Activated CD8-positive, alpha-beta T cell treated with anti-CD3 and anti-CD28 coated beads for 36 hours (primary cell): ENCODE measurements at regions of chr14 and their contacts with region 1.

Region 1: DNA sequence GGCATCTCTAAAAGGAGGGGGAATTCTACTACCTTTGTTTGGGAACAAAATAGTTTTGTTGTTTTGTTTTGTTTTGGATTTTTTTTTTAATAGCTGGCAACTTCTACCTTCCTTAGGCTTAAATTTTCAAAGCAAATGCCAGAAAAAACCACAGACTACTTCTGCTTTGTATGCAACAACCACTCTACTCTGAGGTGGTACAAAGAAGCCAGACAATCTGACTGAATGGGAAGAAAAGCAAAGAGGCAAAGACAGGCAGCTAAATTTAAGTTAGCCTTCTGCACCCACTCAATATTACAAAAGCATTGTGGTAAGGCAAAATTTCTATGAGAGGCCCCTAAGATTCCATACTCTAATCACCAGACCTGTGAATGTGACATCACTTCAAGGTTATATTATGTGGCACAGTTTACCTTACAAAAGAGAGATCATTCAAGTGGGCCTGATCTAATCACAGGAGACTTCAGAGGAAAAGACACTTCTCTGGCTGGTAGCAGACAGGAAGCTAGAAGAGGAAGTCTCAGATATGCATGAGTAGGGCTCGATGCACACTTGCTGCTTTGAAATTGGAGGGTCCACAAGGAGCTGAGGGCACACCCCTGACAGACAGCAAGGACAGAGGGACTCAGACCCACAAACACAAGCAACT is 566.6 kb downstream of the RPS29 start:
- DNase-seq: no peak
- ATAC-seq: no peak
- H3K4me3 Mint-ChIP-seq: no peak overlapping the region
- H3K27ac Mint-ChIP-seq: no peak overlapping the region
- H3K4me1 Mint-ChIP-seq: no peaks in the 10 kb centered on the region
- H3K27me3 Mint-ChIP-seq: no peaks in the 10 kb centered on the region
- CTCF ChIP-seq: no peak

Region 2: DNA sequence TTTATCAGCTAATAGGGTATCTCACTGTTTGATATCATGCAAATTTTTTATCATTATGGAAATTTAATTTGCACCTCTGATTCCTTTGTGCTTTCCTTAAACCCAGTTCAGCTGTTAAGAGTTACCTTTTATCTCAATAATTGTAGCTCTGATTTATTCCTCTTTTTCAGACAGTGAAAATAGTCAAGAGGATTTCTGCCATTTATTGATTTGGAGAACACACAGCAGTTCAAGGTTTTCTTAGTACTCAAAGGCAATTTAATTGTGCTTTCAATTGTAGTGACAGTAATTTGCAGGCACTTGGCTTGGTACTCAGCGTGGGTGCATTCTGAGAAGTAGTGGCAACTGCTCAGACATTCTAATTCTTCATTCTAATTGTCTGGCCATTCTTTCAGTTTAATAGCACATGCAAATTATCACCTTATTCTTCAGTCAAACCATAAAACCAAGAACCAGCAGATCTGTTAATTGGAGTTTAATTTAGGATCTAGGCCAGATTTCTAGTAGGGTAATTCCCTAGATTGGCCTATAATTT is 142.7 kb before region 1 on chr14:
- CTCF ChIA-PET with region 1: no interaction called
- POLR2A ChIA-PET with region 1: no interaction called
- intact Hi-C with region 1: loop called (anchors 5 kb)
- DNase-seq: no peak
- ATAC-seq: no peak
- H3K4me3 Mint-ChIP-seq: no peak overlapping the region
- H3K27ac Mint-ChIP-seq: no peak overlapping the region
- H3K4me1 Mint-ChIP-seq: no peaks in the 10 kb centered on the region
- H3K27me3 Mint-ChIP-seq: no peaks in the 10 kb centered on the region
- CTCF ChIP-seq: no peak

Region 3: DNA sequence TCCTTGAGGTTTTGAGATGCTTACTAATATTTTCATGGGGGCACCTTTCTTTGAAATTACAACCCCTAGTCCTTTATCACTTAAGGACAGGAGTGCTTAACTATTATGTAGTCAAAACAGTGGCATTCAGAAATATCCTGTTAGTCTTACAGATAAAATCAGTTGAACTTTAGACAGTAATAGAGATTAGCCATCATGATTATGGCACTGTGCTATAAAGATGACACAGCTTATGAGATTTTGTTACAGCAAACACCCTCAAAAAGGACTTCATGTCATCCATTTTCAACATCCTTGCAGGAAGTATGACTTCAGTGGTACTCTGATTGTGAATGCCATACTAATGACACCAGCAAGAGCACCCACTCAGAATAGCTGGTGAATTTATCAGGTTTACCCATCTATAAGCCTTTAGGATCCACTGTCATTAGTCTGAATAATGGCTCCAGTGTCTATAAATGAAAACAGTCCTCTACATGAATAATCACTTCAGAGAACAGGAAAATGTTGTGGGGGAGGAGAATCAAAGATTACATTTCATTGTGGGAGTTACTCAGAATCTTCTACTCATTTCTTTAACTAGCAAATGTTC is 48.7 kb before region 1 on chr14:
- CTCF ChIA-PET with region 1: no interaction called
- POLR2A ChIA-PET with region 1: no interaction called
- intact Hi-C with region 1: no loop called
- DNase-seq: no peak
- ATAC-seq: no peak
- H3K4me3 Mint-ChIP-seq: no peak overlapping the region
- H3K27ac Mint-ChIP-seq: no peak overlapping the region
- H3K4me1 Mint-ChIP-seq: no peaks in the 10 kb centered on the region
- H3K27me3 Mint-ChIP-seq: peaks cover 2% of the 10 kb centered on the region
- CTCF ChIP-seq: no peak

Region 4: GRCh38 chr14:49033131-49033530 is 13.5 kb after region 1 on chr14:
- CTCF ChIA-PET with region 1: no interaction called
- POLR2A ChIA-PET with region 1: no interaction called
- intact Hi-C with region 1: no loop called
- DNase-seq: no peak
- ATAC-seq: no peak
- H3K4me3 Mint-ChIP-seq: no peak overlapping the region
- H3K27ac Mint-ChIP-seq: no peak overlapping the region
- H3K4me1 Mint-ChIP-seq: no peaks in the 10 kb centered on the region
- H3K27me3 Mint-ChIP-seq: no peaks in the 10 kb centered on the region
- CTCF ChIP-seq: no peak